GM18951 (cell line): ENCODE measurements at regions of chr3 and their contacts with region 1.

Region 1: DNA sequence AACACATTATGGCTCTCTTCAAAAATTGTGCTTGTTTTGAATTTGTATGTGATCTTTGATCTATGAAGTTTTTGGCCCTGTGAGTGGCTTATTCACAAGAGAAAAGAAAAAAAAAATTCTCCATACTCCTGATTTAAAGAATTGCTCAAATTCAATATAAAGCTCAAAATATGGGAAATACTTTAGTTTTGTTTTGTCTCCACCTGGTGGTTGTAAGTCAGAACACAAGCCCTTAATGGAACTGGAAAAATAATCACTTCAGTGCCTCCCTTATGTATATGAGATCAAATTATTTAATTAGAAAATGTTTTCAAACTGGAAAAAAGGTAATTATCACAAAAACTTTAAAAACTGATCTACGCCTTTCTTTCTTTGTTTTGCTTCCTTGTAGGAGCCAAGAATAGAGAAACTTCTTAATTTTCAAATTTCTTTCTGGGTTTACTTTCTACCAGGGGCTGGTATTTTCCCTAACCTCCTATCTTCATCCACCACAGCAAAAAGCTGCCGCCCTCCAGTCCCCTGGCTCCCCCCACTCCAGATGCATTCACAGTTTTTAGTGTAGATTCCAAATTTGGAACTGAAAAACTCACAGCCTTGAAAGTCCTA is 50.6 kb downstream of the SERP1 start:
- POLR2A ChIP-seq: no peak

Region 2: GRCh38 chr3:149936812-149937233 is 558.8 kb before region 1 on chr3:
- in situ Hi-C with region 1: loop called (anchors 25 kb)
- POLR2A ChIP-seq: no peak

Region 3: GRCh38 chr3:150286390-150287147 is 209.1 kb before region 1 on chr3:
- in situ Hi-C with region 1: loop called (anchors 10 kb)
- POLR2A ChIP-seq: no peak